Panc1 (cell line): ENCODE measurements at regions of chr10 and their contacts with region 1.

Region 1: DNA sequence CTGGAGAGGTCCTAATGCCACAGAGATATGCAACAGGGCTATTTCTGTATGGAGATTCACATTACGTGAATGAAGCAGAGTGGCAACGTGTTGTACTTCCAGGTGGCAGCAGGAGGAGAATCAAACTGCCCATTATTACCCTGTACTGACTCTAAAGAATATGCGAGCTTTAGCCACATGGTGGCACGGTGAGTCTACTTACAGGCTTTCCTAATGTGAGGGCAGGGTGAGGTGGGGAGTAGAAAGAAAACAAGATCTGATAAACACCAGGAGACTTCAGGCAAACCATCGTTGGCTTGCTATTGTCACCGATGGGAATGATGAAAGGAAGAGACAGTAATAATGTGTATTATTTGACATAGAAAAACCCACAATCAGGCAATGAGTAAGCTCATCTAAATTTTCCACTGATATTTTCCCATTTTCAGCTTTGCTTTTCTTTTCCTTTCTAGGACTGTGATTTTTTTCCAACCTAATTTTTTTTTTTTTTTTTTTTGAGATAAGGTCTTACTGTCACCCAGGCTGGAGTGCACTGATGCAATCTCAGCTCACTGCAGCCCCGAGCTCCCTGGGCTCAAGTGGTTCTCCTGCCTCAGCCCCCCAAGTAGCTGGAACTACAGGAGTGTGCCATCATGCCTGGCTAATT is 164.3 kb downstream of the BTAF1 start:
- DNase-seq: peak; percentile 84
- ATAC-seq: peak; percentile 100
- H3K4me3 ChIP-seq: no peak overlapping the region
- H3K27ac ChIP-seq: no peak overlapping the region; the same call in 1 of the 2 replicates
- H3K4me1 ChIP-seq: peaks cover 6% of the 10 kb centered on the region; the same call in 1 of the 2 replicates
- H3K27me3 ChIP-seq: no peaks in the 10 kb centered on the region
- CTCF ChIP-seq: peak; percentile 92

Region 2: DNA sequence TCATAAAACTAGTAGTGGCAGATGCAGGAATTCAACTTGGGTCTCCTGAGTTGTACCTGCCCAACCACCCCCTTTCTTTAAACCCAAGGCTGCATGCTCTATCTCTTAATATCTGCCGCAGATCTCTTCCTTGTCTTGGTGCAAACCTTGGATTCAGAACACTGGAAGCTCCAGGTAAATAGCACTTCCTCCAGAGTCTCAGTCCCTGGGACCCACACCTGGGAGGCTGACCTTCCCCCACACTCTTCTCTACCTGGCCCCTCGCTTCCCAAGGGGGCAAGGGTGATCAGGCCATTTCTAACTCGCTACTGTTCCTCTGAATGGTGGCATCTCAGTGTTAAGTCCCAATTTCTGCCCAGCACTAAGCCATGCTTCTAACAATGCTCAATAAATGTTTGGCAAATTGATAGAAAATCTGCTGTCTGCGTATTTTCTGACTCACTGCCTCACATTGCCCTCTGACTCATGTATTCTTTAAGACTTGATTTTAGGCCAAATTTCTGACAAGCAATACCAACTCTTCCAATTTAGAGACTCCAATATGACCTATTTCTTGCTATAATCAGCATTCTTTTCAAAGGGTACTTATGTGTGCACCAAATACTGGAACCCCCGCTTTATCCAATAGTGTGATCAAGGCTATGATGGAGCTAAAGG is 387.0 kb before region 1 on chr10:
- CTCF ChIA-PET with region 1: no interaction called
- POLR2A ChIA-PET with region 1: no interaction called
- in situ Hi-C with region 1: no loop called
- intact Hi-C with region 1: no loop called
- DNase-seq: no peak
- ATAC-seq: no peak
- H3K4me3 ChIP-seq: no peak overlapping the region
- H3K27ac ChIP-seq: no peak overlapping the region
- H3K4me1 ChIP-seq: no peaks in the 10 kb centered on the region
- H3K27me3 ChIP-seq: peaks cover 4% of the 10 kb centered on the region; the same call in 1 of the 2 replicates
- CTCF ChIP-seq: no peak

Region 3: DNA sequence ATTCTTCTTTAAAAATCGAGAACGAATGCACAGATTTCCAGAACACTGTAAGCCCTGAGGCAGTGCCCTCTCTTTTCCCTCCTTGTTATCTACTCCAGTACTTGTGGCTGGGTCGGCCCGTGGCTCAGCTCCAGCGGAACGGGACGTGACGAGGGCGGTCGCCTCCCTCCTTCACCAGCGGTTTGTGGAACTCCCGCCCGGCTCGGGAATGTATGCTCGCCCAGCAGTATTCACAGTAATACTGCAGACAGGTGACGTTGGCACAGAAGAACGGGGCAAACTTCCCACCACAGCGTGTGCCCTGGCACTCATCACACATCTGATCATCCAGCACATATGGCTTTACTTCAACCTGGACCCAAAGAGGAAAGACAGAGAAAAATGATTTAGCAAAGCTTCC is 35.8 kb before region 1 on chr10:
- CTCF ChIA-PET with region 1: no interaction called
- POLR2A ChIA-PET with region 1: no interaction called
- in situ Hi-C with region 1: no loop called
- intact Hi-C with region 1: no loop called
- DNase-seq: no peak
- ATAC-seq: no peak
- H3K4me3 ChIP-seq: no peak overlapping the region
- H3K27ac ChIP-seq: no peak overlapping the region
- H3K4me1 ChIP-seq: no peaks in the 10 kb centered on the region
- H3K27me3 ChIP-seq: no peaks in the 10 kb centered on the region
- CTCF ChIP-seq: no peak

Region 4: DNA sequence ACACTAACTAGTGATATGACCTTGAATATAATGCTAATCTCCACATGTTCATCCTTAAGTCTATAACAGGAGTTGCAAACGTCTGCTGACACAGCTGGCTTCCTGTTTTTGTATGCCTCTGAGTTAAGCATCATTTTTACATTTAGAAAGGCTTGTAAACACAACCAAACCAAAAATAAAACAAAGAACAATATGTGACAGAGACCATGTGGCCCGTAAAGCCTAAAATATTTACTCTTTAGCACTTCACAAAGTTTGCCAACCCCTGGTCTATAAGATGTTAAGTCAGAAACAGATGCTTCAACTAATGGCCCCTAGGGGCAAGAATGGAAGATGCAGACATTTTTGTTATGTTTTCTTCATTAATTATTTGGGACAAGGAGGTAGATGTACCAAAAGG is 93.7 kb after region 1 on chr10:
- CTCF ChIA-PET with region 1: no interaction called
- POLR2A ChIA-PET with region 1: interaction called, 14 read pairs
- in situ Hi-C with region 1: no loop called
- intact Hi-C with region 1: no loop called
- DNase-seq: no peak
- ATAC-seq: no peak
- H3K4me3 ChIP-seq: no peak overlapping the region
- H3K27ac ChIP-seq: no peak overlapping the region
- H3K4me1 ChIP-seq: no peaks in the 10 kb centered on the region
- H3K27me3 ChIP-seq: no peaks in the 10 kb centered on the region
- CTCF ChIP-seq: no peak; the same call in 1 of the 2 replicates

Region 5: GRCh38 chr10:92208736-92209327 is 121.0 kb after region 1 on chr10:
- CTCF ChIA-PET with region 1: no interaction called
- POLR2A ChIA-PET with region 1: interaction called, 12 read pairs
- in situ Hi-C with region 1: no loop called
- intact Hi-C with region 1: no loop called
- DNase-seq: no peak
- ATAC-seq: no peak
- H3K4me3 ChIP-seq: no peak overlapping the region
- H3K27ac ChIP-seq: no peak overlapping the region
- H3K4me1 ChIP-seq: no peaks in the 10 kb centered on the region
- H3K27me3 ChIP-seq: no peaks in the 10 kb centered on the region
- CTCF ChIP-seq: no peak

Region 6: DNA sequence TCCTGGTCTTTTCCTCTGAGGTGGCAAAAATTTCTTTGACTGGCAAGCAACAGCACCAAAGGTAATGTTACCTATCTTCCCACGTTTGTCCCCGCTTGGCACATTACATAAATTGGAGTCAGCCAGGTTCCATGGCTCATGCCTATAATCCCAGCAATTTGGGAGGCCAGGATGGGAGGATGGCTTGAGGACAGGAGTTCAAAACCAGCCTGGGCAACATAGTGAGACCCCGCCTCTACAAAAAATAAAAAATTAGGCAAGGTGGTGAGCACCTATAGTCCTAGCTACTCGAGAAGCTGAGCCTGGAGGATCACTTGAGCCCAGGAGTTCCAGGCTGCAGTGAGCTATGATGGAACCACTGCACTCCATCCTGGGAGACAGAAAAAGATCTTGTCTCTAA is 346.5 kb after region 1 on chr10:
- CTCF ChIA-PET with region 1: no interaction called
- POLR2A ChIA-PET with region 1: no interaction called
- in situ Hi-C with region 1: no loop called
- intact Hi-C with region 1: loop called (anchors 2 kb)
- DNase-seq: no peak
- ATAC-seq: no peak
- H3K4me3 ChIP-seq: no peak overlapping the region
- H3K27ac ChIP-seq: no peak overlapping the region
- H3K4me1 ChIP-seq: no peaks in the 10 kb centered on the region
- H3K27me3 ChIP-seq: no peaks in the 10 kb centered on the region
- CTCF ChIP-seq: no peak